ENCODE measurements at regions of chr6 and their contacts with region 1.

Region 1: DNA sequence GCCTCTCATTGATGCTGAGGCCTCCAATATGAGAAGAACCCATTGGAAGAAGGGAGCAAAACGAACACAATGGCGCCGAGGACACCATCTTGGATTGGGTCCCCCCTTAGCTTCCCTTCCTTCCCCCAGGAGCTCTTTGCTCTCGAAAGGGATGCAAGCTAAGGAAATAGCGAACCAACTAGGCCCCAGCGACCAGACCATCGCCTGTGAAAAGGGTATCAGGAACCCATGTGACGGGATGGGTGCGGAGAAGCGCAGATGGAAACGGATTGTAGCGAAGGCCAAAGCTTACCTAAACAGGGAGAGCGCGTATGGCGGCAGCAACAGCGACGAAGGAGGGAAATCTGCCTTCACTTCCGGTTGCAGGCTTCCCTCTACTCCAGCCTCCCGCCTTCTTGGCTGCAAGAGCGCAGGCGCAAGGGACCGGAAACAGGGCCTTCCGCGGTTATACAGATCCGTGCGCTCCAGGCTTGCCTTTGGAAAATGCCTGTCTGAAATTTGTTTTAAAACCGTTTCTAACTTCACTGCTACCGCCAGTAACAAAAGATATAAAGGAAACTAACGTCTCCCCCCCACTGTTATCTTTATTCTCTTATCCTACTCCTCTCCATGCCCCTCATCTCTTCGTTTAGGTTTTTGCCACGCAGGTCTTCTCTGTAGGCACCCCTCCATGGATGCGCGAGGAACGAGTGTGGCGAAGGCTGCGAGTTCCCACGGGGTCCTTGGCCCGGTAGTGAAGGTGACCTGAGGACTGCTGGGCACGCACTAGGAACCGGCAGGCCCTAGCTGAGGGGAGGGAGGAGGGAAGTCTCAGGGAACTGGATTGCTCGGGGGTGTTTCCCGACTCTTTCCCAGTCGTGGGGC is at the start of gene DDX39B:
- DNase-seq: peak; percentile 96
- H3K4me3 Mint-ChIP-seq: peak within 1 kb of the TSS; percentile 94
- H3K27ac Mint-ChIP-seq: peak within 1 kb of the TSS; percentile 93
- H3K4me1 Mint-ChIP-seq: peaks cover 50% of the 10 kb centered on the region
- H3K27me3 Mint-ChIP-seq: no peaks in the 10 kb centered on the region
- total RNA-seq, gene DDX39B: 538 to 547 TPM

Region 2: DNA sequence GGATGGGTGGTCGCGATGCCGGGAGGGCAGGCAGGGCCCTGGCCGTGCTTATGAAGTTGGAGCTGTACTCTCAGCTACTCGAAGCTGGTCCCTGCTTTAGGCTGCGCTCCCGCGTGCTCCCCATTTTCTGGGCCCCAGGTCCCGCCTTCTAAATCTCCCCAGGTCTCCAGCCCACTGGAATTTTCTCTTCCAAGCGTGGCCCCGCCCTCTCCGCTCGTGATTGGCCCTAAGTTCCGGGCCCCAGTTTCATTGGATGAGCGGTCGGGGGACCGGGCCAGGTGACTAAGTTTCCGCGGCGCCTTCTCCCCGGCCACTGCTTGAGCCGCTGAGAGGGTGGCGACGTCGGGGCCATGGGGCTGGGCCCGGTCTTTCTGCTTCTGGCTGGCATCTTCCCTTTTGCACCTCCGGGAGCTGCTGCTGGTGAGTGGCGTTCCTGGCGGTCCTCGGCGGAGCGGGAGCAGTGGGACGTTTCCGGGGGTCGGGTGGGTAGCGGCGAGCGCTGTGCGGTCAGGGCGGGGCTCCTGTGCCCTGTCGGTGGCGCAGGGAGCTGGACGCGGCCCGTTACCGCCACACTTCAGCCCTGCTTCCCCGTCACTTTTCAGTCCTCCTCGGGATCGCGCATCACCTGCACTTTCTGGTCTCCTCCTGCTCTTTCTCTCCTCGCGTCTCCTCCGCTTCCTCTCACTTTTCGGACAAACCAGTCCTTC is 138.5 kb before region 1 on chr6 and contains the start of gene MICA:
- CTCF ChIA-PET with region 1: no interaction called
- POLR2A ChIA-PET with region 1: interaction called, 8 read pairs
- intact Hi-C with region 1: loop called (anchors 5 kb)
- DNase-seq: peak; percentile 84
- H3K4me3 Mint-ChIP-seq: peak within 1 kb of the TSS; percentile 79
- H3K27ac Mint-ChIP-seq: peak within 1 kb of the TSS; percentile 47
- H3K4me1 Mint-ChIP-seq: peaks cover 57% of the 10 kb centered on the region
- H3K27me3 Mint-ChIP-seq: no peaks in the 10 kb centered on the region
- total RNA-seq, gene MICA: 7.1 to 8.6 TPM

Region 3: GRCh38 chr6:31453259-31453658 is 88.6 kb before region 1 on chr6:
- CTCF ChIA-PET with region 1: no interaction called
- POLR2A ChIA-PET with region 1: no interaction called
- intact Hi-C with region 1: no loop called
- DNase-seq: no peak
- H3K4me3 Mint-ChIP-seq: no peak overlapping the region
- H3K27ac Mint-ChIP-seq: no peak overlapping the region
- H3K4me1 Mint-ChIP-seq: no peaks in the 10 kb centered on the region
- H3K27me3 Mint-ChIP-seq: peaks cover 7% of the 10 kb centered on the region

Region 4: GRCh38 chr6:31493875-31494694 is 47.8 kb before region 1 on chr6:
- CTCF ChIA-PET with region 1: interaction called, 68 read pairs
- POLR2A ChIA-PET with region 1: interaction called, 20 read pairs
- intact Hi-C with region 1: loop called (anchors 1 kb)
- DNase-seq: peak; percentile 89
- H3K4me3 Mint-ChIP-seq: peak overlapping the region; percentile 90
- H3K27ac Mint-ChIP-seq: peak overlapping the region; percentile 94
- H3K4me1 Mint-ChIP-seq: peaks cover 42% of the 10 kb centered on the region
- H3K27me3 Mint-ChIP-seq: no peaks in the 10 kb centered on the region

Region 5: GRCh38 chr6:31509988-31510387 is 31.9 kb before region 1 on chr6:
- CTCF ChIA-PET with region 1: no interaction called
- POLR2A ChIA-PET with region 1: no interaction called
- intact Hi-C with region 1: no loop called
- DNase-seq: no peak
- H3K4me3 Mint-ChIP-seq: no peak overlapping the region
- H3K27ac Mint-ChIP-seq: no peak overlapping the region
- H3K4me1 Mint-ChIP-seq: peaks cover 2% of the 10 kb centered on the region
- H3K27me3 Mint-ChIP-seq: no peaks in the 10 kb centered on the region

Region 6: DNA sequence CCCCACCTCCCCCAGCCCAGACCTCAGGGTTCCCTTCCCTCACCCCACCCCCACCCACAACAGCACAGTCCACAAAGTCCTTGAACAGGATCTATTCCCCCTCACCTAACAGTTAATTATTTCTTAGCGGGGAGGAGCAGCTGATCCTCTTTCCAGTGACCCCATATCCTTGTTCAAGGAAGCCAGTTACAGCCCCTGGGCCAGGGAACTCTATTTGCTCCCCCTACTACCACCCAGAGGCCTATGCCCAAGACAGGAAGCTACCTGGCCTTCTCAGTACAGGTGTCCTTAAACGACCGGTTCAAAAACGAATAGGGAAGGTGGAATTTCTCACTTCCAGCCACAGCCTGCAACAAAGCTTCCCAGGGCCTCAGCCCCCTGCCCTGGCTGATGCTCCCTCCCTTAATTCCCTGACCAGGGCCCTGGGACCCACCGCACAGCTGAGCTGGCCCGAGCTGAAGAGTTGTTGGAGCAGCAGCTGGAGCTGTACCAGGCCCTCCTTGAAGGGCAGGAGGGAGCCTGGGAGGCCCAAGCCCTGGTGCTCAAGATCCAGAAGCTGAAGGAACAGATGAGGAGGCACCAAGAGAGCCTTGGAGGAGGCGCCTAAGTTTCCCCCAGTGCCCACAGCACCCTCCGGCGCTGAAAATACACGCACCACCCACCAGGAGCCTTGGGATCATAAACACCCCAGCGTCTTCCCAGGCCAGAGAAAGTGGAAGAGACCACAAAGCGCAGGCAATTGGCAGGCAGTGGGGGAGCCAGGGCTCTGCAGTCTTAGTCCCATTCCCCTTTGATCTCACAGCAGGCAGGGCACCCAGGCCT is 12.3 kb before region 1 on chr6:
- CTCF ChIA-PET with region 1: interaction called, 3 read pairs
- POLR2A ChIA-PET with region 1: interaction called, 10 read pairs
- intact Hi-C with region 1: no loop called
- DNase-seq: no peak
- H3K4me3 Mint-ChIP-seq: no peak overlapping the region
- H3K27ac Mint-ChIP-seq: no peak overlapping the region
- H3K4me1 Mint-ChIP-seq: peaks cover 21% of the 10 kb centered on the region
- H3K27me3 Mint-ChIP-seq: no peaks in the 10 kb centered on the region

Region 7: GRCh38 chr6:31580807-31581433 is 39.0 kb after region 1 on chr6:
- CTCF ChIA-PET with region 1: interaction called, 1,658 read pairs
- POLR2A ChIA-PET with region 1: interaction called, 125 read pairs
- intact Hi-C with region 1: loop called (anchors 2 kb)
- DNase-seq: peak; percentile 92
- H3K4me3 Mint-ChIP-seq: peak overlapping the region; percentile 97
- H3K27ac Mint-ChIP-seq: peak overlapping the region; percentile 92
- H3K4me1 Mint-ChIP-seq: peaks cover 44% of the 10 kb centered on the region
- H3K27me3 Mint-ChIP-seq: no peaks in the 10 kb centered on the region

Region 8: GRCh38 chr6:31619805-31620585 is 78.1 kb after region 1 on chr6:
- CTCF ChIA-PET with region 1: interaction called, 7 read pairs
- POLR2A ChIA-PET with region 1: interaction called, 8 read pairs
- intact Hi-C with region 1: loop called (anchors 1 kb)
- DNase-seq: peak; percentile 98
- H3K4me3 Mint-ChIP-seq: peak overlapping the region; percentile 91
- H3K27ac Mint-ChIP-seq: peak overlapping the region; percentile 98
- H3K4me1 Mint-ChIP-seq: peaks cover 47% of the 10 kb centered on the region
- H3K27me3 Mint-ChIP-seq: no peaks in the 10 kb centered on the region

Region 9: DNA sequence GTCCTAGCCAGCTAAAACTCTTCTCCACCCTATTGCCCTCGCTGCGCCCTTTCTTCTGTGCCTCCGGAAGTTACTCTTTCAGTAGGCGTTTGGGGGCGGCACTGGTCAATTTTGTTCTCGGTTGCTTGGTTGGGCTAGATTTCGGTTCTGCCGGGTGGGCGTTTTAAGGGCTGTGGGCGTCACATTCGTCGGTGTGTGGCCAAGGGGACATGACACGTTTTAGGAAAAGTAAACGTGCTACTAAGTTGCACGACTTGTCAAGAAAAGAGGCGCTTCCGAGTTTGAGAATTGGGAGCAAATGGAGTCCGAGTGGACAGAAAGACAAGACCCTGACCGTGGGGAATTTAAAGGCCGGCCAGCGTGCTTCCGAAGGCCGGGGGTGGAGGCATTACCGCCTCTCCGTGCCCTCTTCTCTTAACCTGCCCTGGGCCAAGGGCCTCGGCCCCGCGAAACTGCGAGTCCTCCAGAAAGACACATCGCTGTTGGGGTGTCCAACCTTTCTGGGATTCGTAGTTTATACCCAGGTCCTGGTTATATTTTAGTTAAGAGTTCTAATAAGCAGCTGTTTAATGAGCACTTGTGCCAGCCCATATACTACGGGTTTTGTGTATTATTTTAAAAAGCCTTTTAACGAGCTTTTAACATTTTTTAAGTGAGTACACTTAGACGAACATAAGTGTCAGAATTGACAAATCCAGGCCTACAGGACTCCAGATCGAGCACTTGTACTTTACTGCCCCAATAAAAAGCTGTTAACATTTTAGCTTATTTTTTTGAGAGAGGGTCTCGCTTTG is 111.2 kb after region 1 on chr6:
- CTCF ChIA-PET with region 1: interaction called, 5 read pairs
- POLR2A ChIA-PET with region 1: interaction called, 13 read pairs
- intact Hi-C with region 1: loop called (anchors 1 kb)
- DNase-seq: peak; percentile 92
- H3K4me3 Mint-ChIP-seq: peak overlapping the region; percentile 94
- H3K27ac Mint-ChIP-seq: peak overlapping the region; percentile 99
- H3K4me1 Mint-ChIP-seq: peaks cover 54% of the 10 kb centered on the region
- H3K27me3 Mint-ChIP-seq: no peaks in the 10 kb centered on the region

Measured in activated CD4-positive, alpha-beta memory T cell treated with anti-CD3 and anti-CD28 coated beads for 36 hours (primary cell).